Thyroid gland (tissue), 4 donors: ENCODE measurements at regions of chr1 and their contacts with region 1.

Region 1: GRCh38 chr1:36279110-36279788 is 26.9 kb upstream of the SH3D21 start:
- DNase-seq: no peak
- H3K4me3 ChIP-seq: no peak overlapping the region
- H3K27ac ChIP-seq: peak overlapping the region in 2 of 3 donors; percentile 24 to 26
- H3K4me1 ChIP-seq: peaks cover 10 to 24% of the 10 kb centered on the region in 2 donors
- H3K27me3 ChIP-seq: no peaks in the 10 kb centered on the region
- CTCF ChIP-seq: no peak
- POLR2A ChIP-seq: no peak

Region 2: DNA sequence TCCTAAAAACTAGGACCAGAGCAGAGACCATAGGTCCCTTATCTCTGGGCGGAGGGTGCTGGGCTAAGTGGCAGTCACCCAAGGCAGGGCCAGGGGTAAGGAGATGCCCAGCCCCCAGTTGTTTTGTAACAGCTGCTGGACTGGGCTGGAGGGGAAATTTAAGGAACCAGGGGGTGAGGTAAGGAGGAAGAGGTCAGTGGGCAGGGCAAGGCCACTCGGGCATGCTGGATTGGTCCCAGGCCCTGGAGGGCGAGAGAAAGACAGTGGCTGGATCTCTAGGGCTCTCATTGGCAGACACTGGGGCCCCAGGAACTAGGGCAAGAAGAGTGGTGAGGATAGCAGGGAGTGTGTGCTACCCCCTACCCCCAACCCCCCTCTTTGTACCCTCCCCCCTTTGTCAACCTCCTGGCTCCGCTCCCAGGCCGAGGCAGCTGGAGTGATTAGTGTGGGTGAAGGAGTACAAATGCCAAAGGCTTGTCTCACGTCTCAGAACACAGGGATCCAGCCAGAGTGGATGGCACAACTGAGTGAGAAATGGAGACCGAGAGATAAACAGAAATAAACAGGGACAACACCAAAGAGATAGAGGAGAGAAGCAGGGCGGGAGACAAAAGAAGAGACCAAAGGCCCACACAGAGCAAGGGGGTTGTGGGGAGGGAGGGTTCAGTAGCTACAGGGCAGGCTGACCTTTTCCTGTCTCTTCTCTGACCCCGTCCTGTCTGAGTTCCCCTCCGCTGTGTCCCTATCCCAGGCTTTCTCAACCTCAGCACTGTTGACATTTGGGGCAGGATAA is 75.5 kb before region 1 on chr1:
- intact Hi-C with region 1: no loop called
- DNase-seq: peak; percentile 85 to 90
- H3K4me3 ChIP-seq: no peak overlapping the region
- H3K27ac ChIP-seq: peak overlapping the region; percentile 90 to 97 (median 96)
- H3K4me1 ChIP-seq: peaks cover 25 to 36% of the 10 kb centered on the region in 2 donors
- H3K27me3 ChIP-seq: no peaks in the 10 kb centered on the region
- CTCF ChIP-seq: no peak
- POLR2A ChIP-seq: peak in 1 of 2 donors; percentile 17

Region 3: GRCh38 chr1:36223993-36224536 is 55.2 kb before region 1 on chr1 and contains the start of gene THRAP3:
- intact Hi-C with region 1: loop called (anchors 10 kb)
- DNase-seq: peak; percentile 100
- H3K4me3 ChIP-seq: peak within 1 kb of the TSS; percentile 64 to 88 (median 71)
- H3K27ac ChIP-seq: peak within 1 kb of the TSS; percentile 95 to 96 (median 96)
- H3K4me1 ChIP-seq: peaks cover 23 to 24% of the 10 kb centered on the region in 2 donors
- H3K27me3 ChIP-seq: no peaks in the 10 kb centered on the region
- CTCF ChIP-seq: peak in 1 of 6 experiments; percentile 10
- POLR2A ChIP-seq: peak; percentile 92 to 98
- total RNA-seq, gene THRAP3: 88.9 to 129 (median 115) TPM

Region 4: GRCh38 chr1:36471830-36472641 is 192.8 kb after region 1 on chr1:
- intact Hi-C with region 1: no loop called
- DNase-seq: peak; percentile 85 to 90
- H3K4me3 ChIP-seq: no peak overlapping the region
- H3K27ac ChIP-seq: peak overlapping the region; percentile 94 to 98 (median 96)
- H3K4me1 ChIP-seq: peaks cover 33 to 50% of the 10 kb centered on the region in 2 donors
- H3K27me3 ChIP-seq: no peaks in the 10 kb centered on the region
- CTCF ChIP-seq: no peak
- POLR2A ChIP-seq: peak in 1 of 2 donors; percentile 69